CD8-positive, alpha-beta T cell (primary cell): ENCODE measurements at regions of chr7 and their contacts with region 1.

Region 1: GRCh38 chr7:96976106-96976505 is 29.2 kb upstream of the DLX6 start:
- DNase-seq: no peak
- ATAC-seq: no peak
- H3K4me3 ChIP-seq: no peak overlapping the region
- H3K4me3 Mint-ChIP-seq: no peak overlapping the region
- H3K27ac ChIP-seq: no peak overlapping the region
- H3K27ac Mint-ChIP-seq: no peak overlapping the region
- H3K4me1 ChIP-seq: no peaks in the 10 kb centered on the region
- H3K4me1 Mint-ChIP-seq: no peaks in the 10 kb centered on the region
- H3K27me3 ChIP-seq: peaks cover 3% of the 10 kb centered on the region in 2 experiments
- H3K27me3 Mint-ChIP-seq: peaks cover 40% of the 10 kb centered on the region
- CTCF ChIP-seq: no peak

Region 2: GRCh38 chr7:96942112-96942511 is 34.0 kb before region 1 on chr7:
- CTCF ChIA-PET with region 1: no interaction called
- POLR2A ChIA-PET with region 1: no interaction called
- intact Hi-C with region 1: loop called in 1 of 2 experiments (anchors 1 kb)
- DNase-seq: no peak
- ATAC-seq: no peak
- H3K4me3 ChIP-seq: no peak overlapping the region
- H3K4me3 Mint-ChIP-seq: no peak overlapping the region
- H3K27ac ChIP-seq: no peak overlapping the region
- H3K27ac Mint-ChIP-seq: no peak overlapping the region
- H3K4me1 ChIP-seq: no peaks in the 10 kb centered on the region
- H3K4me1 Mint-ChIP-seq: no peaks in the 10 kb centered on the region
- H3K27me3 ChIP-seq: no peaks in the 10 kb centered on the region
- H3K27me3 Mint-ChIP-seq: no peaks in the 10 kb centered on the region
- CTCF ChIP-seq: no peak

Region 3: GRCh38 chr7:97090761-97091353 is 114.8 kb after region 1 on chr7:
- CTCF ChIA-PET with region 1: no interaction called
- POLR2A ChIA-PET with region 1: no interaction called
- intact Hi-C with region 1: no loop called
- DNase-seq: no peak
- ATAC-seq: no peak
- H3K4me3 ChIP-seq: no peak overlapping the region
- H3K4me3 Mint-ChIP-seq: no peak overlapping the region
- H3K27ac ChIP-seq: no peak overlapping the region
- H3K27ac Mint-ChIP-seq: no peak overlapping the region
- H3K4me1 ChIP-seq: no peaks in the 10 kb centered on the region
- H3K4me1 Mint-ChIP-seq: no peaks in the 10 kb centered on the region
- H3K27me3 ChIP-seq: no peaks in the 10 kb centered on the region
- H3K27me3 Mint-ChIP-seq: peaks cover 9% of the 10 kb centered on the region
- CTCF ChIP-seq: no peak